HEK293 (cell line): ENCODE measurements at regions of chr14 and their contacts with region 1.

Region 1: DNA sequence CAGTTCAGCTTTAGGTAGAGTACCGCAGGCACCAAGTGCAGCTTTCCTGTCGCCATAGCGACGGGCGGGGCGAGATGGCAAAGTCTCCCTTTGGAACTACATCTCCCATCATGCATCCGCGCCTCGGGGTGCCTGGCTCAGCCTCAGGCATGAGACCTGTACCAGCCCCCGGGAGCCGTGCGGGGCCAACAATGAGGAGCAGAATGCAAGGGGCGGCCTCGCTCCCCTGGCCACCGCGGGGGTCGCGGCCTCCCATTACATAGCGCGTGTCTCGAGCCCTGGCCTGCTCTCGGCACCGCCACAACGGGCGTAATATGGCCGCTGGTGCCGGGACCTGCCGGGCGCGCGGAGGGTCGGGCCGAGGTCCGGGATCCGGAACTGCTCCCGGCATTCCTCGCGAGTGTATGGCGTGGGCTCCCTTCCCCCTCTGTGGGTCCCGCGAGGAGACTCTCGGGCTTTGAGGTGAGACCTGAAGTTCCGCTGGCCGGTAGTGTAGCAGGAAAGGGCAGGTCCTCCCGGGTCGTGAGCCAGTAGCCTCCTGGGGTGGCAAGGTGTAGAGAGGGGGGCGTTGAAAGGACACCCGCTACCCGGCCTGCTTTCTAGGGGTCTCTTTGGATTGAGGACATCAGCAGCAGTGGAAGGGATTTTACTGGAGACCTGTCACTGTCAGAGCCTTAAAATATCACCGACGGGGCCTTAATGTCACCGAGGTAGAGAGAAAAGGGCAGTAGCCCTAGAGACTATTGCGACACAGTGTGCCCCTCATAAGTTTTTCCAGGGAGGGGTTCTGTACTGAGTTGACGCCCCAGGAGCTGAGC is at the start of gene THTPA:
- H3K4me3 ChIP-seq: peak within 1 kb of the TSS; percentile 85
- H3K27ac ChIP-seq: peak within 1 kb of the TSS; percentile 81
- H3K4me1 ChIP-seq: peaks cover 10% of the 10 kb centered on the region
- CTCF ChIP-seq: no peak

Region 2: DNA sequence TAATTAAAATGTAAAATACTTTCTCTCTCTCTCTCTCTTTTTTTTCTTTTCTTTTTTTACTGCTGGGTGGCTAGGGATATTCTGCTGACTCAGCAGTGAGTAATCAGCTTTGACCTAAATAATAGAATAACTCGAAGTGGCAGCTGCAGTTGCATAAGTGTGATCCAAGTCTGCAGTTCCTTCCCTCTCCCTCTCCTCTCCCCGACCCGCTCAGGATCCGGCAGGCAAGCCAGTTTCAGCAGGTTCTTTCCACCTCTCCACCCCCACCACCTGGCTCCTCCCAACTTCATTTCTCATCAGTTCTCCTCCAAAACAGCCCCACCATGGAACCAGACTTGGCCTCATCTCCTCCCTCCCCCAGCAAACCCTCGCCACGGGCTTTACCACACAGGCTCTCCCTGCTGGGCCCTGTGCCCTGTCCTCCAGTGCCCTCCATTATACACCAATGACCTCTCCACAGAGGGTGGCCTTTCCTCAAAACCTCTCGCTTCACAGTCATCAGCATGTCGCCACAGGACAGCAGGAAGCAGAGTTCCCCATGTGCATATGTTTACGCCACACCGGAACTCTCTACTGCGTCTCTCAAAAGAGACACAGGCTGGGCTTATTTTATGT is 395.1 kb before region 1 on chr14:
- CTCF ChIA-PET with region 1: no interaction called
- POLR2A ChIA-PET with region 1: no interaction called
- H3K4me3 ChIP-seq: no peak overlapping the region
- H3K27ac ChIP-seq: no peak overlapping the region
- H3K4me1 ChIP-seq: no peaks in the 10 kb centered on the region; the same call in 1 of the 2 replicates
- CTCF ChIP-seq: no peak

Region 3: GRCh38 chr14:23478111-23478759 is 77.9 kb before region 1 on chr14:
- CTCF ChIA-PET with region 1: interaction called, 338 read pairs
- POLR2A ChIA-PET with region 1: interaction called, 9 read pairs
- H3K4me3 ChIP-seq: no peak overlapping the region
- H3K27ac ChIP-seq: no peak overlapping the region
- H3K4me1 ChIP-seq: no peaks in the 10 kb centered on the region
- CTCF ChIP-seq: 0 out of 2 replicates have a peak, but pooled peaks have one; percentile 36